Activated T-helper 1 cell treated with anti-CD3 and anti-CD28 coated beads, Interleukin-12 subunit alpha, Interleukin-12 subunit beta, Interleukin-2, Interleukin-4 antibody, amounts not matched to agents 30 ng/mL and 10 ng/mL and 1 ng/mL, durations not matched to agents 14 hours and 24 hours and 36 hours (primary cell): ENCODE measurements at regions of chr1 and their contacts with region 1.

Region 1: DNA sequence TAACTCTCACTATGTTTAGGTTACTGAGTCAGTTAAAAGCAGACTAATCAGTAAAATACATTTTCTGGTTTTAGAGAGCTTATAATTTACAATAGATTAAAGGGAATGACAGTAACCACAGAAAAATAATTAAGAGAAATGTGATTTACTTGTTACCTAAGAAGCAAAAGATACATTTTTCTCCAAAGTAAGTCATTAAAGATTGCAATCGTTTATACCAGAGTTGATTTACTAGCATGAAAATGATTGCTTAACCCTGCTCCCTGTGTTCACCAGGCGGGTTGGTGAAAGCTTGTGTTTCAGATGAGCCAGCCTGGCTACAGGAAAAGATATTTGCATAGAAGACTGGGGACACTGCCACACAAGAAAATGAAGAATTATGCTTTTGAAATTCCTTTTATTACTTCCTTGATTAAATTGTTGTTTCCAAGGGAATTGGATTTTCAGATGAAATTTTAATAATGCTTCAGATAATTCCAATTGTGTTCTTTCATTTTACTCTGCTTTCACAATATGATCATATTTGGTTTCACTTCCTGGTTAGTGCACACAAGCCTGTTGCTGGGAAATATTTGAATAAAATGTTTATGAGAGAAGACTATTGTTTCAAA is 27.9 kb downstream of the LRRC8B start:
- DNase-seq: no peak
- H3K4me3 Mint-ChIP-seq: peak overlapping the region; percentile 50
- H3K27ac Mint-ChIP-seq: peak overlapping the region; percentile 75
- H3K4me1 Mint-ChIP-seq: peaks cover 92% of the 10 kb centered on the region
- H3K27me3 Mint-ChIP-seq: no peaks in the 10 kb centered on the region

Region 2: GRCh38 chr1:89489047-89489729 is 63.4 kb before region 1 on chr1:
- intact Hi-C with region 1: loop called (anchors 2 kb)
- DNase-seq: no peak
- H3K4me3 Mint-ChIP-seq: no peak overlapping the region
- H3K27ac Mint-ChIP-seq: peak overlapping the region; percentile 82
- H3K4me1 Mint-ChIP-seq: peaks cover 35% of the 10 kb centered on the region
- H3K27me3 Mint-ChIP-seq: peaks cover 4% of the 10 kb centered on the region

Region 3: DNA sequence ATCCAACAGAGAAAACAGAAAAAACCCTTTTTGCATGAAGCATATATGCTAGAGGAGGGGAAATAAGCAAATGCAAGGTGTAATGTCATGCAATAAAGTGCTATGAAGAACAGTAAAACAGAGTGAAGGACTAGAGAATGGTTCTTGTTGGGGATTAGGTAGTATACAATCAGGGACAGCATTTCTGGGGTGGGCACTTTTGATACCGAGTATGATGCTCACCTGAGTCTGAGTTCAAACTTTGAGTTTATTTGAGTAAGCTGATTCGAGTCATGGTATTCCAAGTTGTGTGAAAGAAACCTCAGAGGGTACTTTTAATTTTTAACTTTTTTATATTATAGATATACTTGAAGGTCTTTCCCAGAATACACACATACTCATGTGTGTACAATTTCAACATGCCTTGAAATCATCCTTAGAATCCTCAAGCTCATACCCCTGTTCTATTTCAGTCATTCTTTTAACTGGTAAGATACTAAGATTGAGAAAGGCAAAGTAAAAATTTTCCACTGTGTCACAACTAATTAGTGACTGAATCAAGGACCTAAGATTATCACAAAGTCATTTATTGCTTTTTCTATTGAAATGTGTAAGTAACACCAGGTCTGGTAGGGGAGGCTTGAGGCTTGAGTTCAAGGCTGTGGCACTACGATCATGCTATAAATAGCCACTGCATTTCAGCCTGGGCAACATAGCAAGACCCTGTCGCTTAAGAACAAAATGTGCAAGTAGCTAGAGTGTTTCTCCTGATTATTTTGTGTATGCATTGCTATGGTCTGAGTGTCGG is 15.8 kb before region 1 on chr1:
- intact Hi-C with region 1: loop called (anchors 2 kb)
- DNase-seq: no peak
- H3K4me3 Mint-ChIP-seq: peak overlapping the region; percentile 50
- H3K27ac Mint-ChIP-seq: peak overlapping the region; percentile 89
- H3K4me1 Mint-ChIP-seq: peaks cover 78% of the 10 kb centered on the region
- H3K27me3 Mint-ChIP-seq: no peaks in the 10 kb centered on the region

Region 4: GRCh38 chr1:89566761-89567174 is 14.2 kb after region 1 on chr1:
- intact Hi-C with region 1: loop called (anchors 2 kb)
- DNase-seq: no peak
- H3K4me3 Mint-ChIP-seq: no peak overlapping the region
- H3K27ac Mint-ChIP-seq: no peak overlapping the region
- H3K4me1 Mint-ChIP-seq: peaks cover 20% of the 10 kb centered on the region
- H3K27me3 Mint-ChIP-seq: no peaks in the 10 kb centered on the region

Region 5: DNA sequence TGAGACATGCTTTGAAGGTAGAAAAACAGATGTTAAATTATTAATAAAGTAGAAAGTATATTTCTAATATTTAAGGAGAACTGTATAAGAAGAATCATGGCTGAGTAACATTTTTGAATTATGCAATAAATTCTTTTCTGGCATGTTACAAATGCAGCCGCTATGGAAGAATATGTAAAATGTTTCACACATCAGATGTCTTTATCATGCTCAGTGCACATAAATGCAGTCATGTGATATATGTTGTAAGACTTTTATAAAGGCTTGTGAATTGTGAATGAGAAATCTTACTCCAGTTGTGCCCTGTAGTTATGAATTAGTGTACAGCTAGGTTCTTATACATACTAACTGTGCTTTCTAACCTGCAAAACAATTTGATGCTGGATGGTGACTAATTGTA is 25.6 kb after region 1 on chr1:
- intact Hi-C with region 1: no loop called
- DNase-seq: no peak
- H3K4me3 Mint-ChIP-seq: no peak overlapping the region
- H3K27ac Mint-ChIP-seq: no peak overlapping the region
- H3K4me1 Mint-ChIP-seq: peaks cover 57% of the 10 kb centered on the region
- H3K27me3 Mint-ChIP-seq: no peaks in the 10 kb centered on the region

Region 6: GRCh38 chr1:89589515-89589914 is 36.9 kb after region 1 on chr1:
- intact Hi-C with region 1: loop called (anchors 2 kb)
- DNase-seq: no peak
- H3K4me3 Mint-ChIP-seq: peak overlapping the region; percentile 11
- H3K27ac Mint-ChIP-seq: peak overlapping the region; percentile 74
- H3K4me1 Mint-ChIP-seq: peaks cover 89% of the 10 kb centered on the region
- H3K27me3 Mint-ChIP-seq: no peaks in the 10 kb centered on the region

Region 7: DNA sequence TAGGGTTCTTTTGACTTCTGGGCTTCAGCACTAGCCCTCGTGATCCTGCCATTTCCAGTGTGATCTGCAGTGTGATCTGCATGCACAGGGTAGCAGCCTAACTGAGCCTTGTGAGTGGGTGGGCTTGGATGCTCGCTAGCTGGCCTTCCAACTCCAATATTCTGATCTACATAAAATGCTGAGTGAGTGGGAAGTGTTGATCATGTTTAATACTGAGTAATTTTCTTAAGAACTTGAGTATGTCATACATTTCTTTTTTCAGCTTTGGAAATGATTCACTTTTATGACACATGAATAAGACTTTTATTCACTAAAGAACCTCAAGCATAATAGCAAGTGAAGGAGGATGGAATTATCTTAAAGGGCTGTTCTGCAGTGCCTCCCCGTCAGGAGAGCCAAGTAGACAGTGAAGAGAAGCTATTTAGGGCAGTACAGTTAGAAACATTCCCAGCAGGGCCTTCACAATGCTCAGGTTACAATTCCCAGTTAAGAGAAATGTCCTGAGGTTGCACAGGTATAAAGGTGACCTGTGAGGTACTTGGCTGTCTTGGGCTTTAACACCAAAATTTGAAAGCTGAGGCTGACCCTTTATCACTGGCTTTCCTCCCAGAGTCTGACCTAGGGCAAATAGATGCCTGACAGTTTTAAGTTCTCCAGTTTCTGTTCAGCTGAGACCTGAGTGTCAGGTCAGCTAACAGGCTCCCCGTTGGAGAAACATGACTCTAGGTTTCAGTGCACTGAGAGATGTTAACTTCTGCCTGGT is 51.3 kb after region 1 on chr1:
- intact Hi-C with region 1: loop called (anchors 2 kb)
- DNase-seq: no peak
- H3K4me3 Mint-ChIP-seq: peak overlapping the region; percentile 56
- H3K27ac Mint-ChIP-seq: peak overlapping the region; percentile 99
- H3K4me1 Mint-ChIP-seq: peaks cover 97% of the 10 kb centered on the region
- H3K27me3 Mint-ChIP-seq: no peaks in the 10 kb centered on the region